Dorsolateral prefrontal cortex (tissue), 120 donors: ENCODE measurements at regions of chr3 and their contacts with region 1.

Region 1: DNA sequence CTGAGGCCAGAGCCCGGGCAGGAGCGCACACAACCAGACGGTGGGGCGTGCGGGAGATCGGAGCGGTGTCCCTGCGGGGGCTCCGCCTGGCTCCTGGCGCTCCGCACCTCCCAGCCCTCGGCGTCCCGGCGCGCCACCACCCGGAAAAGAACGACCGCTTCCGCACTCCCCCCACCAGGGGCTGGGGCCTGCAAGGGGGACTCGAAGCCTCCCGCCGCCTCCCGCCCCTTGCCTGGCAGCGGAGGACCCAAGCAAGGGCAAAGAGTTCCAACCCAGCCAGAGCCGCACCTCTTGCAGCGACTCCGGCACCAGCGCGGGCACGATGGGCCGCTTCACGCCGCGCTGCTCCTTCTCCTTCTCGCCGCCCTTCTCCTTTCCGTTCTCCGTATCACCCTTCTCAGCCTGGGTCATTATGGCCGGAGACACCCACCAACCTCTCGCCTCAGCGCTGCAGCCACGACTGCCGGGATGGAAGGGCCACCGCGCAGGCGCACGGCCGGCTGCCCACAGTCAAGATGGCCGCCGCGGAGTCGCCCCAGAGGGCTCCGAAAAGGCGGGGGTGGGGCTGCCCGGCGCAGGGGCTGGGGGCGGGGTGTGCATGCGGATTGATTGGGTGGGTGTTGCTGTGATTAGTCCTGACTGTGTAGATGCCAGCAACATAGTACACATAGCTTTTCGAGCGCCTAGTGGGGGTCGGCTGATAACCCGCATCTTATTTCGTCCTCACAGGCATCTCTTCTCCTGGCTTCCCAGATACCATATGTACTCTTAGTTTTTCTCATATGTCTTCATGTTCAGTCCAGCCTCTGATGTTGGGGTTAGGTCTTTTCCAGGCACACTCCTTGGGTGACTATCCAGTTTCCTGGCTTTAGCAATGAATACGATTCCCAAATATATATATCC is at the start of gene ACTR8:
- DNase-seq: peak; percentile 76 to 94 (median 82)
- H3K4me3 ChIP-seq: peak within 1 kb of the TSS; percentile 66 to 100 (median 94)
- H3K27ac ChIP-seq: peak within 1 kb of the TSS; percentile 32 to 97 (median 89)
- H3K27me3 ChIP-seq: no peaks in the 10 kb centered on the region
- CTCF ChIP-seq: peak in 23 of 56 donors; percentile 9 to 54 (median 25)
- total RNA-seq, gene ACTR8: 26.1 to 57.0 (median 40.1) TPM

Region 2: DNA sequence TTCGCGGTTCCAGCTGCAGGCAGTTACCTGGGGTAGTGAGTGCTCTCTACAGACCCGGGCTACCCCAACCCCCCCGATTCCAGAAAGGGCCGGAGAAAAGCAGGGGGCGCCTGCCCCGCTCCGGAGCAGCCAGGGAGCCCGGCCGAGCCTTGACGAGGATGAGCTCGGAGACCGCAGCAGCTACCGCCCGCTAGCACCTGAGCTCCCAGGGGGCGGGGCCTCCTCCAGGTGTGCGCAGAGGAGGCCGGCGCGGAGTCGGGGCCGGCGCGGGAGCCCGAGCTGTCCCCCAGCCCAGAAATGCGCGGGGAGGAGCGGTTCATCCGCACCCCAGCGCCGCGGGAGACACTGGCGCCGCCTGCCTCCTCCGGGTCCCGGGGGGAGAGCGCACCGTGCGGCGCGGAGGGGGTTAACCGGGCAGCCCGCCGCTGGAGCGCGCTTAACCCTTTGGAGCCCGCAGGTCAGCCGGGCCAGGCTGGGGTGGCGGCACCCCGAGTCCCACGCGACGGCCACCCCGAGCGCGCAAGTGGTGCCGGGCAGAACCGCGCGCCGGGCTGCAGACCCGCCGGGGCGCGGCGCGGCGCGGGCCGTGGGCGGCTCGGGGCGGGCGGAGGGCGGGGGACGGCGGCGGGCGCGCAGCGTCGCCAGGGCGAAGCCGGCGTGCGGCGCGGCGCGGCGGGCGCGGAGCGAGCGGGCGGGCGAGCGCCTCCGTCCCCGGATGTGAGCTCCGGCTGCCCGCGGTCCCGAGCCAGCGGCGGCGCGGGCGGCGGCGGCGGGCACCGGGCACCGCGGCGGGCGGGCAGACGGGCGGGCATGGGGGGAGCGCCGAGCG is 387.8 kb before region 1 on chr3 and contains the start of gene CACNA1D:
- intact Hi-C with region 1: loop called in 1 of 2 experiments (anchors 10 kb)
- DNase-seq: peak in 5 of 10 donors; percentile 13 to 62 (median 45)
- H3K4me3 ChIP-seq: peak within 1 kb of the TSS; percentile 41 to 82 (median 72)
- H3K27ac ChIP-seq: peak within 1 kb of the TSS in 57 of 59 donors; percentile 3 to 90 (median 73)
- H3K27me3 ChIP-seq: no peaks in the 10 kb centered on the region
- CTCF ChIP-seq: peak in 7 of 56 donors; percentile 3 to 25 (median 17)
- total RNA-seq, gene CACNA1D: 42.4 to 137 (median 88.6) TPM

Region 3: GRCh38 chr3:53650424-53650823 is 231.5 kb before region 1 on chr3:
- intact Hi-C with region 1: no loop called
- DNase-seq: no peak
- H3K4me3 ChIP-seq: no peak overlapping the region
- H3K27ac ChIP-seq: no peak overlapping the region
- H3K27me3 ChIP-seq: no peaks in the 10 kb centered on the region
- CTCF ChIP-seq: no peak

Region 4: GRCh38 chr3:53729618-53730017 is 152.3 kb before region 1 on chr3:
- intact Hi-C with region 1: loop called in 1 of 2 experiments (anchors 5 kb)
- DNase-seq: no peak
- H3K4me3 ChIP-seq: peak overlapping the region in 1 of 59 donors; percentile 42
- H3K27ac ChIP-seq: no peak overlapping the region
- H3K27me3 ChIP-seq: no peaks in the 10 kb centered on the region
- CTCF ChIP-seq: peak in 13 of 56 donors; percentile 9 to 39 (median 21)

Region 5: DNA sequence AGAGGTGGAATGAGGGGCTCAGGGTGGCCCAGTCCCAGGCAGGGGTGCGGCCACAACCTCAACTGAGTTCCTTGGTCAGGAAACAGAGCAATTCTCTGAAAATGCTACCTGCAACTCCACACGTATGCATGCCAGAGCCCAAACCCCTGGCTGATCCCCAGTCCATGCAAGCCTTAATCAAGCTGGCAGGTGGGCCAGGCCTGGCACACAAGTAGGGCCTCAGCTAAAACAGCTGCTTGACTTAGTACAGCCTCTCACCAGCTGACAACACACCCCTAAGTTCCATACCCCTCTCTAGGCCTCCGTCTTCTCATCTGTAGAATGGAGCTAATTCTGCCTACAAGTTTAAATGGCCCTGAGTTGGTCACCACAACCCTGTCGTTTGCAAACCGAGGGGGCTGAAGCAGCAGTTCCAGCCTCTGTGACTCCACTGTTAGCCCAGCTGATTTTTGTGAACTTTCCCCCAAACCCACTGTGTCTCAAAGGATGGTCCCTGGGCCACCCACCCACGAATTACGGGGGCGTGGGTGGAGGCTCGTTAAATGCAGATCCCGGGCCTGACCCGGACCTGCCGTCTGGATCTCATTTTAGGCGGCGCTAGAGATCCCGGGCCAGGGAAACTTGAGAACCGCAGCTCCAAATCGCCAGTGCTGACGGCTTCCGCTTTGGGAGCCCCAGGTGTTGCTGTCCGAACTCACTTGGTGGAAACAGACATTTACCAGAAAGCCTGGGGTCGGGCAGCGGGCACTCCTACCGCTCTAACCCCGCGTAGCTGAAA is 36.6 kb before region 1 on chr3:
- intact Hi-C with region 1: loop called (anchors 2 kb)
- DNase-seq: peak in 7 of 10 donors; percentile 37 to 68 (median 62)
- H3K4me3 ChIP-seq: peak overlapping the region; percentile 48 to 84 (median 74)
- H3K27ac ChIP-seq: peak overlapping the region in 58 of 59 donors; percentile 8 to 100 (median 92)
- H3K27me3 ChIP-seq: peaks cover 0 to 16% (median 0%) of the 10 kb centered on the region in 45 donors
- CTCF ChIP-seq: peak in 36 of 56 donors; percentile 8 to 40 (median 27)

Region 6: DNA sequence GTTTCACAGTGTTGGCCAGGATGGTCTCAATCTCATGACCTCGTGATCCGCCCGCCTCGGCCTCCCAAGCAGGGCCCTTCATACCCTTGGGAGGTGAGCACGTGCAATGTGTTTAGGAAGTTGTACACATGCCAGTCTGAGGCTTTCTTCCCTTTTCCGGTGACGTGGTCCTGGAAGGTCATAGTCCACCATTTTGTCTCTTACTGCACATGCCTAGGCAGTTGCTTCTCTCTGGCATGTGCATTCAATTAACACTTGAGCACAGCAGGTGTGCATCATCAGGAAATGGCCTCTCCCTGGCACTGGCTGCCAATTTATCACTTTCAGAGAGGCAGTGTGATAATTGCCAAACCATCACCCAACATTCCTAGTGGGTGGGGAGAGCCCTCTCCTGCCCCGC is 31.5 kb after region 1 on chr3:
- intact Hi-C with region 1: no loop called
- DNase-seq: no peak
- H3K4me3 ChIP-seq: no peak overlapping the region
- H3K27ac ChIP-seq: no peak overlapping the region
- H3K27me3 ChIP-seq: peaks cover 0 to 6% (median 0%) of the 10 kb centered on the region in 45 donors
- CTCF ChIP-seq: no peak